OCI-LY7 (cell line): ENCODE measurements at regions of chr12 and their contacts with region 1.

Region 1: DNA sequence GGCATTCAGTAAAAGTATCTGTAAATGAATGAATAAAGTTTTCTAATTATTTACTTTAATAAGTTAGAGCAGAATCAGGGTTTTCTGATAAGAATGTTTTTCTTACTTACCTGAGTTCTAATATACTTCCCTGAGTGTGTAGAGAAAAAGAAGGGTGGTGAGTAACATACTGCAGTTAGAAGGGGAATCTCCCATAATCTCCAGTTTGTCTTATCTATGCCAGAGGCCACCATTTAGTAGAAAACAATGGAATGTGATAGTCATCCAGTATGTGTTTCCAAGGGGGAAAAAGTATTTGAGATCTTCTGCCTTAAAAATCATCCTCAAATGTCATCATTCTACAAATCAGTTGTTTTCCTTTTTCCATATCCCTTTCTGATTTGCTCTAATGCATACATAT is 56.5 kb upstream of the PAWR start:
- DNase-seq: no peak
- H3K4me3 ChIP-seq: no peak overlapping the region
- H3K27ac ChIP-seq: no peak overlapping the region
- H3K4me1 ChIP-seq: no peaks in the 10 kb centered on the region
- CTCF ChIP-seq: no peak

Region 2: GRCh38 chr12:79358716-79359300 is 388.5 kb before region 1 on chr12:
- CTCF ChIA-PET with region 1: no interaction called
- POLR2A ChIA-PET with region 1: no interaction called
- intact Hi-C with region 1: no loop called
- DNase-seq: no peak
- H3K4me3 ChIP-seq: no peak overlapping the region
- H3K27ac ChIP-seq: no peak overlapping the region
- H3K4me1 ChIP-seq: no peaks in the 10 kb centered on the region
- CTCF ChIP-seq: 0 out of 2 replicates have a peak, but pooled peaks have one; percentile 13

Region 3: DNA sequence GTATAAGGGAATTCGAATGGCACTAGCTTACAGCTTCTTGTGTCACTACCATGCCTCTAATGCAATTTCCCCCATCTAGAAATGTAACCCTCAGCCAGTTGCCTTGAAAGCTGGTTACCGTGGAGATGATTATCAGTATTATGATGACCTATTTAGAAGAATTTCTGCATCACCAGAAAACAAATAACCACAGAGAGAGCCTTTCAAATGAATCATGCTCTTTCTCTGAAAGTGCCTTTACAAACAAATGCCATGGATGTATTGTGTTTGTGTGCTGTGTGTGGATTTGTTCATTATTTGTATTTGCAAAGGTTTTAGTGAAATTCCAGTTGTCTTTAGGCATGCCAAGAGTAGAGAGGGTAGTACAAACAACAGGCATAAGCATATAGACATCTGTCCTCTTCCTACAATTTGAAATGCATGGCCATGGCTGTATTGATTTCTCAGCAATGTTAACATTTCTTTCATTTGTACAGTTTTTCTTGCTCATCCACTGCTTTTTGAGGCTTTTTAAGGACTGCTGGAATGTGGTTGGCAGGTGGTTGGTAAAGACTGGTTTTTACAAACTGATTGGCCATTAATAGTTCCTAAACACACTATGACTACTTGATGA is 323.1 kb before region 1 on chr12:
- CTCF ChIA-PET with region 1: no interaction called
- POLR2A ChIA-PET with region 1: no interaction called
- intact Hi-C with region 1: no loop called
- DNase-seq: no peak
- H3K4me3 ChIP-seq: no peak overlapping the region
- H3K27ac ChIP-seq: no peak overlapping the region
- H3K4me1 ChIP-seq: no peaks in the 10 kb centered on the region
- CTCF ChIP-seq: no peak

Region 4: GRCh38 chr12:80186727-80187217 is 439.5 kb after region 1 on chr12:
- CTCF ChIA-PET with region 1: no interaction called
- POLR2A ChIA-PET with region 1: no interaction called
- intact Hi-C with region 1: loop called (anchors 10 kb)
- DNase-seq: peak; percentile 50
- H3K4me3 ChIP-seq: no peak overlapping the region
- H3K27ac ChIP-seq: no peak overlapping the region
- H3K4me1 ChIP-seq: no peaks in the 10 kb centered on the region
- CTCF ChIP-seq: peak; percentile 82